PC-3 (cell line): ENCODE measurements at regions of chr14 and their contacts with region 1.

Region 1: DNA sequence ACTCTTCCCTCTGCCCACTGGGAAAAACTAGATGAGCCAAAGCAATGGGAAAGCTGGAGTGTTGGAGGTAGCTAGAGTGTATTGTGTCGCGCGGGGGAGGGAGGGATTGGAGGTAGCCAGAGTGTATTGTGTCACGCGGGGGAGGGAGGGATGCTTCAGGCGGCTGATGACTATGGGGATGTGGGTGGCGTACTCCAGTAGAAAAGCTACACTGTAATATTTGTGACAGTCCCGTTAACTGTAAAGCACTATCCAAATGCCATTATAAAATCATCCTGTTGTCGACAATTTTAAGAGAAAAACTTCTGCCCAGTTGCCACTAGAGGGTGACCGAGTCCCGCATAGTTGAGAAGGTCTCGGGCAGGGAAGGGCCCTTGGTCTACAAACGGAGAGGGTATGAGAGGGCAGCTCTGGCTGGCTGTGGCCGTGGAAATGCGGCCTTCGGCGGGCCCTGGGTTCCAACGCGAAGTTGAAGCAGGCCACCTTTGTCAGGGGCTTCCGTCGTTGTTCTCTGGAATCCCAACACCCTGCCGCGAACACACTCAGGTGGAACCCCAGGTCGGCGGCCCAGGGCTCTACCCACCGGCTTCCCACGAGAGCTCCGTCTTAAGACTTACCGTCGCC is 15.1 kb upstream of the PLEK2 start:
- DNase-seq: peak; percentile 87
- ATAC-seq: peak; percentile 86
- H3K4me3 ChIP-seq: no peak overlapping the region
- H3K27ac ChIP-seq: no peak overlapping the region
- H3K4me1 ChIP-seq: peaks cover 8% of the 10 kb centered on the region
- H3K27me3 ChIP-seq: 0 out of 2 replicates have a peak, but pooled peaks cover under 1% of the 10 kb centered on the region
- CTCF ChIP-seq: peak; percentile 87

Region 2: GRCh38 chr14:67343601-67344230 is 83.4 kb before region 1 on chr14:
- CTCF ChIA-PET with region 1: interaction called, 3 read pairs
- POLR2A ChIA-PET with region 1: interaction called, 14 read pairs
- intact Hi-C with region 1: no loop called
- DNase-seq: peak; percentile 60
- ATAC-seq: peak; percentile 88
- H3K4me3 ChIP-seq: no peak overlapping the region
- H3K27ac ChIP-seq: peak overlapping the region; percentile 35
- H3K4me1 ChIP-seq: peaks cover 11% of the 10 kb centered on the region
- H3K27me3 ChIP-seq: no peaks in the 10 kb centered on the region
- CTCF ChIP-seq: no peak

Region 3: GRCh38 chr14:67467179-67468080 is 40.3 kb after region 1 on chr14:
- CTCF ChIA-PET with region 1: no interaction called
- POLR2A ChIA-PET with region 1: no interaction called
- intact Hi-C with region 1: loop called (anchors 1 kb)
- DNase-seq: no peak
- ATAC-seq: peak; percentile 35; the same call in 1 of the 2 replicates
- H3K4me3 ChIP-seq: no peak overlapping the region
- H3K27ac ChIP-seq: no peak overlapping the region
- H3K4me1 ChIP-seq: no peaks in the 10 kb centered on the region
- H3K27me3 ChIP-seq: no peaks in the 10 kb centered on the region
- CTCF ChIP-seq: peak; percentile 57

Region 4: GRCh38 chr14:67514650-67515385 is 87.7 kb after region 1 on chr14:
- CTCF ChIA-PET with region 1: no interaction called
- POLR2A ChIA-PET with region 1: no interaction called
- intact Hi-C with region 1: loop called (anchors 5 kb)
- DNase-seq: peak; percentile 35
- ATAC-seq: peak; percentile 61
- H3K4me3 ChIP-seq: peak overlapping the region; percentile 83
- H3K27ac ChIP-seq: no peak overlapping the region
- H3K4me1 ChIP-seq: peaks cover 8% of the 10 kb centered on the region; the same call in 1 of the 2 replicates
- H3K27me3 ChIP-seq: peaks cover 10% of the 10 kb centered on the region; the same call in 1 of the 2 replicates
- CTCF ChIP-seq: no peak

Region 5: DNA sequence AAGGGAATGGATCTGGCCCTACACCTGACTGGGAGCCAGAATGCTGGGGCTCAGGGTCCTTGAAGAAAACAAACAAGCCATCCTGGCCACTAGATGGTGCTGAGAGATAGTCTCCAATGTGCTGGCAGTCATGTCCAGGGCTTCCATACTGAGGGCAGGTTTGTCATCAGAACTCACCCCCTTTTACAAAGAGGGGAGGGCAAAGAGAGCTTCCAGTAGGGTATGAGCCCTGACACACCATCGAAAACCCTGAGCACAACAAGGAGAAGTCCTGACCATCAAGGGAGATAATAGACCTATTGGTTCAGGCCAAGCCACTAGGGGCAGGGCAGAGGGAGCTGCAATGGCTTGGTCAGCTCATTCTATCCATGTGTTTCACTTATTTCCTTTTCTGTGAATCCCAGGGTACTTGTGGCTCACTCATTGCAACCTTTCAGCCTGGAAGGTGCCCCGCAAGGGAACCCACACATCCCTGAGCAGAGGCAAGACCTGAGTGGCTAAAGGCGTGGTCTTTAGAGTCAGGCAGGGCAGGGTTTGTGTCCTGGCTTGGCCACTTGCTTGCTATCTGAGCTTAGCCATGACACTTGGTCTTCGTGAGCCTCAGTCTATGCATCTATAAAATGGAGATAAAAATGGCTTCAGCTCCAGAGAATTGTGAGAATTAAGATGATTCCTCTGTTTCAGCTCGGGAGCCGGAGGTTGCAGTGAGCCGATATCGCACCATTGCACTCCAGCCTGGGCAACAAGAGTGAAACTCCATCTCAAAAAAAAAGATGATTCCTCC is 99.8 kb after region 1 on chr14:
- CTCF ChIA-PET with region 1: interaction called, 17 read pairs
- POLR2A ChIA-PET with region 1: interaction called, 3 read pairs
- intact Hi-C with region 1: loop called (anchors 2 kb)
- DNase-seq: peak; percentile 63
- ATAC-seq: peak; percentile 87
- H3K4me3 ChIP-seq: no peak overlapping the region
- H3K27ac ChIP-seq: no peak overlapping the region
- H3K4me1 ChIP-seq: no peaks in the 10 kb centered on the region; the same call in 1 of the 2 replicates
- H3K27me3 ChIP-seq: peaks cover 11% of the 10 kb centered on the region; the same call in 1 of the 2 replicates
- CTCF ChIP-seq: peak; percentile 99

Region 6: GRCh38 chr14:67532998-67533753 is 106.1 kb after region 1 on chr14 and contains the start of gene PLEKHH1:
- CTCF ChIA-PET with region 1: interaction called, 3 read pairs
- POLR2A ChIA-PET with region 1: no interaction called
- intact Hi-C with region 1: loop called (anchors 2 kb)
- DNase-seq: peak; percentile 80
- ATAC-seq: peak; percentile 92
- H3K4me3 ChIP-seq: peak within 1 kb of the TSS; percentile 79
- H3K27ac ChIP-seq: no peak within 1 kb of the TSS
- H3K4me1 ChIP-seq: peaks cover 6% of the 10 kb centered on the region; the same call in 1 of the 2 replicates
- H3K27me3 ChIP-seq: no peaks in the 10 kb centered on the region
- CTCF ChIP-seq: no peak
- total RNA-seq, gene PLEKHH1: 6.2 and 11.1 TPM in 2 replicates

Region 7: DNA sequence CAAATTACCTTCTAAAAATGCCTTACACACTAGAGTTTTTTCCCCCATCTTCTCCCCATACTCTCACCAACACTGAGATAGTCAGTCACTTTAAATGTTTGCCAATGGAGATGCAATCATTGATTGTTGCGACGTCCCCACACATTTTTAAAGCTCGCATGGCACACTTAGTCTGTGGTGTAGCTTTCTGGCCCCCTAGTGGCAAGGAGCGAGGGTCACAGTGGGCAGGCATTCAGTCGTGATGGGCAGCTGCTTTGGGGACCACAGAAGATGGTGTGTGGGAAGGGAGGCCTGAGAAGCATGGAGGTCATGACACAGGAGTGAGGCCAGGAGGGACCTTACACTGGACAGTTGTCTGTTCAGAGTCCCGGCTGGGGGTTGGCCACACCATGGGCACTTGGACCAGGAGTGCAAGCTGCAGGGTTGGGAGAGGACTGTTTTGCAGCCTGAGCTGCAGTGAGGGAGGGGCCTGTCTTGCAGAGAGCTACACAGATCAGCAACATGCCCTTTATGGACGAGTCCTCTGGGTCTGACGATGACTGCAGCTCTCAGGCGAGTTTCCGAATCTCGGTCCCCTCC is 144.3 kb after region 1 on chr14:
- CTCF ChIA-PET with region 1: interaction called, 55 read pairs
- POLR2A ChIA-PET with region 1: no interaction called
- intact Hi-C with region 1: loop called (anchors 1 kb)
- DNase-seq: peak; percentile 67
- ATAC-seq: peak; percentile 92
- H3K4me3 ChIP-seq: no peak overlapping the region
- H3K27ac ChIP-seq: no peak overlapping the region
- H3K4me1 ChIP-seq: peaks cover 9% of the 10 kb centered on the region
- H3K27me3 ChIP-seq: no peaks in the 10 kb centered on the region
- CTCF ChIP-seq: peak; percentile 98